Colonic mucosa (tissue), 4 donors: ENCODE measurements at regions of chr3 and their contacts with region 1.

Region 1: GRCh38 chr3:66483406-66483906 is 17.4 kb downstream of the LRIG1 start:
- DNase-seq: no peak
- H3K4me3 ChIP-seq: no peak overlapping the region
- H3K27ac ChIP-seq: peak overlapping the region; percentile 62
- H3K4me1 ChIP-seq: peaks cover 40% of the 10 kb centered on the region
- H3K27me3 ChIP-seq: no peaks in the 10 kb centered on the region
- CTCF ChIP-seq: no peak

Region 2: GRCh38 chr3:66261355-66261754 is 222.1 kb before region 1 on chr3:
- intact Hi-C with region 1: no loop called
- DNase-seq: no peak
- H3K4me3 ChIP-seq: no peak overlapping the region
- H3K27ac ChIP-seq: no peak overlapping the region
- H3K4me1 ChIP-seq: no peaks in the 10 kb centered on the region
- H3K27me3 ChIP-seq: no peaks in the 10 kb centered on the region
- CTCF ChIP-seq: no peak

Region 3: GRCh38 chr3:66442254-66443117 is 41.0 kb before region 1 on chr3:
- intact Hi-C with region 1: loop called (anchors 5 kb)
- DNase-seq: peak; percentile 91
- H3K4me3 ChIP-seq: no peak overlapping the region
- H3K27ac ChIP-seq: peak overlapping the region; percentile 63
- H3K4me1 ChIP-seq: peaks cover 33% of the 10 kb centered on the region
- H3K27me3 ChIP-seq: no peaks in the 10 kb centered on the region
- CTCF ChIP-seq: no peak

Region 4: GRCh38 chr3:66582721-66583423 is 99.4 kb after region 1 on chr3:
- intact Hi-C with region 1: no loop called
- DNase-seq: no peak
- H3K4me3 ChIP-seq: no peak overlapping the region
- H3K27ac ChIP-seq: no peak overlapping the region
- H3K4me1 ChIP-seq: no peaks in the 10 kb centered on the region
- H3K27me3 ChIP-seq: no peaks in the 10 kb centered on the region
- CTCF ChIP-seq: no peak